GM18951 (cell line): ENCODE measurements at regions of chr22 and their contacts with region 1.

Region 1: DNA sequence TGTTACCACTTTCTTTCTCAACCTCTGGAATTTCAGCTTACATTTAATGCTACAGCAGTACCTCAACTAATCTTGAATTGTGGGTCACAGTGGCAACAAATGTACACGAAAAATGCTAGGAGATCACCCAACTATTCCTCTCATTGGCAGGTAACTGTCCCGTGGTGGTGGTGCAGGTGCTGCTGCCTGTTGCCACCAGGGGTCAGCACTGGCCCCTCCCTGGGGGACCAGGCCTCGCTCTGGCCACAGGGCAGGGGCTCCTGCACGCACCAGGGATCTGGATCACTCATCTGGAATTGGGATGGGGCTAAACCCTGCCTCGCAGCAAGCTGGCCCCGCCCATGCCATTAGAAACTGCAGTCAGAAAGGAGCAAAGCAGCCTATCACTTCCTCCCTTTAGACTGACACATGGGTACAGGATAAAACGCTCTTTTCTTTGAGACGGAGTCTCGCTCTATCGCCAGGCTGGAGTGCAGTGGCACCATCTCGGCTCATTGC is 6.9 kb upstream of the POLDIP3 start:
- POLR2A ChIP-seq: no peak

Region 2: GRCh38 chr22:42169055-42169469 is 452.5 kb before region 1 on chr22:
- in situ Hi-C with region 1: no loop called
- POLR2A ChIP-seq: no peak

Region 3: GRCh38 chr22:42814215-42814614 is 192.7 kb after region 1 on chr22:
- in situ Hi-C with region 1: loop called (anchors 10 kb)
- POLR2A ChIP-seq: no peak